ENCODE measurements at regions of chr11 and their contacts with region 1.

Region 1: GRCh38 chr11:119196833-119197483 is 9.2 kb upstream of the CBL start:
- DNase-seq: peak in 1 of 2 experiments; percentile 74
- H3K4me3 ChIP-seq: no peak overlapping the region
- H3K27ac ChIP-seq: no peak overlapping the region
- H3K4me1 ChIP-seq: peaks cover 0 to 7% (median under 1%) of the 10 kb centered on the region in 4 experiments; a peak in 4 of 7 replicates
- H3K27me3 ChIP-seq: no peaks in the 10 kb centered on the region
- CTCF ChIP-seq: peak in 2 of 3 experiments; percentile 87; a peak in 3 of 4 replicates
- EP300 ChIP-seq: no peak
- POLR2A ChIP-seq: no peak
- RAD21 ChIP-seq: peak; percentile 85 to 88

Region 2: DNA sequence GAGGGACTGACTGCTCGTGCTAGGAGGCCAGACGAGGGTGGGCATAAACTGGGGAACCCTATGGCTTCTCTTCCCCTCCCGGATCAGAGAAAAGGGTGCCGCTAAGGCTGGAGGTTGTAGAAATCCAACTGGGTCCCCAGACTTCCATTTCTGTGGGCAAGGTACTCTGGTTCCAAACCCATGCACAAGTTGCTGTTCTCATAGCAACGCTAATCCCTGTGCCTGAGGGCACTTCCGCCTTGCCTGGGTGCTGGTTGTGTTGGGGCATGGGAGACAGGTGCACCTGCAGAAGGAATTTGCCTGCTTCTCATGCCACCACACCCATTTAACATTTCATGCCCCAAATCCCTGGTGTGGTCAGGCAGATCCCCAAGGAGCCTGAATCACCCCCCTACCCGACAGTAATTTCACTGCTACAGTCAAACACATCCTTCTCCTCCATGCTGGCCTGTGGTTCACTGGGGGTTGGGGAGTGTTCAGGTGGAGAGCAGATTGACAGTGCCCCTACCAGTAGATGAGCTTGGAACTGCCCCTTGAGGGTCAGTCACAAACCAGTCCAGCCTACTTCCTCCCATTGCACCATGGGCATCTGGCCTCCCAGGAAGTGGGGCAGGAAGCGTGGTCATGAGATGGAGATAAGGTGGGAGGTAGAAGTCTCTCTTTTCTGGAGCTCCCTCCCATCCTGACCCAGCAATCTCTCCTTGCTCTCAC is 88.7 kb before region 1 on chr11:
- CTCF ChIA-PET with region 1: interaction called, 13 read pairs
- POLR2A ChIA-PET with region 1: no interaction called
- DNase-seq: peak in 1 of 2 experiments; percentile 63
- H3K4me3 ChIP-seq: peak overlapping the region; percentile 71 to 83 (median 75)
- H3K27ac ChIP-seq: no peak overlapping the region
- H3K4me1 ChIP-seq: peaks cover 0 to 20% (median 5%) of the 10 kb centered on the region in 4 experiments; a peak in 5 of 7 replicates
- H3K27me3 ChIP-seq: peaks cover 2 to 20% (median 15%) of the 10 kb centered on the region in 4 experiments
- CTCF ChIP-seq: no peak
- EP300 ChIP-seq: no peak
- POLR2A ChIP-seq: no peak
- RAD21 ChIP-seq: no peak

Region 3: GRCh38 chr11:119134389-119134978 is 62.5 kb before region 1 on chr11:
- CTCF ChIA-PET with region 1: interaction called, 367 read pairs
- POLR2A ChIA-PET with region 1: no interaction called
- DNase-seq: peak in 1 of 2 experiments; percentile 61
- H3K4me3 ChIP-seq: no peak overlapping the region
- H3K27ac ChIP-seq: no peak overlapping the region
- H3K4me1 ChIP-seq: no peaks in the 10 kb centered on the region
- H3K27me3 ChIP-seq: no peaks in the 10 kb centered on the region
- CTCF ChIP-seq: peak; percentile 62 to 83 (median 82)
- EP300 ChIP-seq: no peak
- POLR2A ChIP-seq: no peak
- RAD21 ChIP-seq: peak; percentile 31 to 42; a peak in 2 of 4 replicates

Region 4: DNA sequence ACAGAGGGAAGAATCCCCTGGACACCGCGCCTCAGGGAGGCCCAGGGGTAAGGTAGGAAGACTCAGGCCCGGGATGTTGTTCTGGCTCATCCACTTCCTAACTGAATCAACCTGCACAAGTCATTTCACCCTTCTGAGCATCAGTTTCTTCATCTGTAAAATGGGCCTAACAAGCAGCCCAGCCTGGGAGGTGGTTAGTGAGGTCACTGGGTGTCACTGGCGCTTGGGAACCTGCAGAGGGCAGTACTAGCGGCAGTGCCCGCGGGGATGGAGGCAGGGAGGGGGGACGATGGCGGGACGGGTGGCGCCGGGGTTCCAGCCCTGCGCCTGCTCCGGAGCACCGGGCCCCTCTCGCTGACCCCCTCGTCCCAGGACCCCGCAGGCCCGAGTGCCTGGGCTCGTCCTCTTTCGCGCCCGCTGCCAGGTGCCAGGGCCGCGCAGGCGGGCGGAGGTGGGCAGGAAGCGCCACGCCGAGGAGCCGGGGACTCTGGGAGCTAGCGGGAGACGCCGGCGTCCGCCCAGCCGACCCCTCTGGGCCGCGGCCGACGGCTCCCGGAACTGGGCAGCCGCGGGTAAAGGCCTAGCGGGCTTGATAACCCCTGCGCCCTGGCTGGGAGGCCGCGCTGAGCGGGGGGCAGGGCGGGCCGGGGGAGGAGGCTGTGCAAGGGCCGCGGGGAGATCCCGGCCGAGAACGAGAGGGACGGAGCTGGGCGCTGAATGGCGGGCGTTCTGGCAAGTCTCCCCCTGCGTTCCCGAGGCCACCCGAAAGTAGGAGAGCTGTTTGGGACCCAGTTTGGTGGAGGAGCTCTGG is 28.3 kb before region 1 on chr11 and contains the start of gene NLRX1:
- CTCF ChIA-PET with region 1: interaction called, 33 read pairs
- POLR2A ChIA-PET with region 1: interaction called, 15 read pairs
- DNase-seq: peak; percentile 51 to 90
- H3K4me3 ChIP-seq: peak within 1 kb of the TSS; percentile 64 to 87 (median 68)
- H3K27ac ChIP-seq: peak within 1 kb of the TSS; percentile 88
- H3K4me1 ChIP-seq: peaks cover 0 to 4% (median 1%) of the 10 kb centered on the region in 4 experiments; a peak in 4 of 7 replicates
- H3K27me3 ChIP-seq: no peaks in the 10 kb centered on the region
- CTCF ChIP-seq: peak; percentile 82 to 94 (median 90)
- EP300 ChIP-seq: peak in 1 of 2 experiments; percentile 56; a peak in 1 of 3 replicates
- POLR2A ChIP-seq: peak in 1 of 2 experiments; percentile 69; a peak in 2 of 3 replicates
- RAD21 ChIP-seq: peak; percentile 43 to 62; a peak in 3 of 4 replicates
- total RNA-seq, gene NLRX1: 12.9 and 13.2 TPM in 2 replicates

Region 5: GRCh38 chr11:119175493-119176077 is 21.4 kb before region 1 on chr11:
- CTCF ChIA-PET with region 1: interaction called, 45 read pairs
- POLR2A ChIA-PET with region 1: interaction called, 6 read pairs
- DNase-seq: no peak
- H3K4me3 ChIP-seq: no peak overlapping the region
- H3K27ac ChIP-seq: no peak overlapping the region
- H3K4me1 ChIP-seq: no peaks in the 10 kb centered on the region; a peak in 1 of 7 replicates
- H3K27me3 ChIP-seq: no peaks in the 10 kb centered on the region
- CTCF ChIP-seq: no peak
- EP300 ChIP-seq: no peak
- POLR2A ChIP-seq: no peak
- RAD21 ChIP-seq: no peak

Region 6: GRCh38 chr11:119181677-119182412 is 15.1 kb before region 1 on chr11:
- CTCF ChIA-PET with region 1: interaction called, 45 read pairs
- POLR2A ChIA-PET with region 1: interaction called, 7 read pairs
- DNase-seq: no peak
- H3K4me3 ChIP-seq: no peak overlapping the region
- H3K27ac ChIP-seq: no peak overlapping the region
- H3K4me1 ChIP-seq: no peaks in the 10 kb centered on the region; a peak in 1 of 7 replicates
- H3K27me3 ChIP-seq: no peaks in the 10 kb centered on the region
- CTCF ChIP-seq: no peak
- EP300 ChIP-seq: no peak
- POLR2A ChIP-seq: no peak
- RAD21 ChIP-seq: no peak

Measured in H1 (cell line).